ENCODE measurements at regions of chr18 and their contacts with region 1.

Region 1: GRCh38 chr18:12038639-12039417 is 54.8 kb upstream of the ANKRD62 start:
- DNase-seq: peak; percentile 64 to 84
- ATAC-seq: peak; percentile 87 to 95
- H3K4me3 ChIP-seq: peak overlapping the region; percentile 52
- H3K27ac ChIP-seq: peak overlapping the region; percentile 78 to 93
- H3K4me1 ChIP-seq: peaks cover 23% of the 10 kb centered on the region
- CTCF ChIP-seq: peak; percentile 84
- EP300 ChIP-seq: no peak
- POLR2A ChIP-seq: no peak
- RAD21 ChIP-seq: peak; percentile 84 to 93

Region 2: DNA sequence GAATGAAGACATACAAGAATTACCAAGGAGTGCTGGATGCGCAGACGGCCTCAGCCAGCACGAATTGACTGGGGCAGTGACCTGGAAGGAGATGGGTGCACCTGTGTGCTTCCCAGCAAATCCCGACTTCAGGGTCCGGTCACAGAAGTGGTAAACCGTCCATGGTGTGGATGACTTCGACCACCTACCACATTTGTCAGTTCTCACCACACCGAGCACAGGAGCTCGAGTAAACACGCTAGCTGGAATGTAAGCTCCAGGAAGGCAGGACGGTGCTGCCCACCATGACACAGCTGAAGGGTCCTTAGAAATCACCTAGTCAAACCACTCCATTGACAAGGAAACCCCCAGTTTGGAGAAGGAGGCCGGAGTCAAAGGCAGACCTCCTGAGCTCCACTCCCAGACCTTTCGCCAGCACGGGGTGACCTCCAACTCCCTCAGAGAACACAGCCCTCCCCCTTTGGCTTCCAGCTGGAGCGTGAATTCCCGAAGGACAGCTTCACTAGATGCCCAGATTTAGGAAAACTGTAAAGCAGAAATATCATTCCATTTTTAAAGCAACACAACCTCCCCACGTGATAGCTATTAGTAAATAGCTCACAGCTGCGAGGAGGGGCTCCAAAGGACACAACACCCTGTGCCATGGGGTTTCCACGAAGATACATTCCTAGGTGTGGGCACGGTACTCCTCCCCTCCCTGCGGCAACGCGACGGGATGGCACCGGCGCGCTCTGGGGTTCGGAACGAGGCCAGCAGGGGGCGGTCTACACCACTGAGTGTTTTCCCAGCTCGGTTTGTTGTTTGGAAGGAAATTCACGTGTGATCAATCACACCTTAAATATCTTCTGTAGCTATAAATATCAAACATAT is 383.9 kb before region 1 on chr18:
- CTCF ChIA-PET with region 1: interaction called, 29 read pairs
- POLR2A ChIA-PET with region 1: no interaction called
- DNase-seq: peak; percentile 37 to 65
- ATAC-seq: peak; percentile 88 to 93
- H3K4me3 ChIP-seq: 0 out of 3 replicates have a peak overlapping the region, but pooled peaks have one; percentile 29
- H3K27ac ChIP-seq: 0 out of 6 replicates have a peak overlapping the region, but pooled peaks of 1 of the 2 experiments have one; percentile 18
- H3K4me1 ChIP-seq: no peaks in the 10 kb centered on the region
- CTCF ChIP-seq: peak; percentile 78
- EP300 ChIP-seq: no peak
- POLR2A ChIP-seq: no peak
- RAD21 ChIP-seq: peak; percentile 76 to 84

Region 3: DNA sequence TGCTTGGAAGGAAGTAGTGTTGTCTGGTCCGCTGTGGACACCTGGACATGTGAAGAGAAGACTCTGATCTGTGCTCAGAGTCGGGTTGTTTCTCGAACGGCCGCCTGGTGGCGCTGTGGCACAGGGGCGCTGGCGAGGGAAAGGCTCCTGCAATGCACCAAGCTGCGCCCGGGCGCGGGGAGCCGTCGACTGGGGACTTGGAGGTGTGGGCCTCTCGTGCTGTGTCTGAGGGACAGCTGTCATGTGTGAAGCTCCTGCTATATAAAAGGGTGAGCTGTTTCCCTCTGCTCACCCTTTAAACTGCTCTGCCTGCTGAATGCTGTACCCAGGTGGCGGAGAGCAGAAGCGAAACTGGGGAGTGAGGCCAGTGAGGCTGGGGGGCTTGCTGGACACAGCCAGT is 305.8 kb before region 1 on chr18:
- CTCF ChIA-PET with region 1: interaction called, 13 read pairs
- POLR2A ChIA-PET with region 1: no interaction called
- DNase-seq: peak; percentile 52 to 74
- ATAC-seq: peak; percentile 96 to 98
- H3K4me3 ChIP-seq: no peak overlapping the region
- H3K27ac ChIP-seq: peak overlapping the region; percentile 60 to 70; a peak in 4 of 6 replicates
- H3K4me1 ChIP-seq: 0 out of 3 replicates have a peak, but pooled peaks cover 3% of the 10 kb centered on the region
- CTCF ChIP-seq: peak; percentile 79
- EP300 ChIP-seq: no peak
- POLR2A ChIP-seq: no peak
- RAD21 ChIP-seq: peak; percentile 79 to 84

Region 4: DNA sequence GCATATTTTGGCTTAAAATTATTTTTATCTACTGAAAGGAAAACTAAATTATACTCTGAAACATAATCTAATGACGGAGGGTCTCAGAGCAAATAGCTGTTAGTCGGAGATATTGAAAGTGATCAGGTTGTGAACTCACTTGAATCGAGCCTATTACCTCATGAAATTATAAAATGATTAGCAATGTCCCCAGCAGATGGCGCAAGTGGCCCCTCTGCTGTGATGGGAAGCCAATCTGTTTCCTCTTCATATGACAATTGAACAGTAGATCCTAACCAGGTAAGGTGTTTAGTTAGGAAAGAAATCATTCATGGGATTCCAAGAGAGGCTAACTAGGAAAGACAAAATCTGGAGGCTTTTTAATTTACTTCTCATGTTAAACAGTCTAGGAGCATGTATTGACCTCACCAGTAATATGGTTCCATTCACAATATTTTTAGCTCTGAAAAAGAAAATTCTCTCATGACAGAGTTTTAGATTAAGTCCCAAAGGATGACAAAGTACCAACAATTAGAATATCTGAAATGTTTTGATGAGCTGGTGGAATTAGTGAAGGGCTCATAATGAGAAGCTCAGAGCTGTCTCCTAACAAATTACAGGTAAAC is 100.9 kb before region 1 on chr18:
- CTCF ChIA-PET with region 1: interaction called, 39 read pairs
- POLR2A ChIA-PET with region 1: interaction called, 4 read pairs
- DNase-seq: peak; percentile 58 to 69
- ATAC-seq: peak; percentile 54 to 81; a peak in 4 of 6 replicates
- H3K4me3 ChIP-seq: no peak overlapping the region
- H3K27ac ChIP-seq: peak overlapping the region in 1 of 2 experiments; percentile 55; a peak in 2 of 6 replicates
- H3K4me1 ChIP-seq: peaks cover 6% of the 10 kb centered on the region; the same call in 1 of the 3 replicates
- CTCF ChIP-seq: peak; percentile 74
- EP300 ChIP-seq: no peak
- POLR2A ChIP-seq: no peak
- RAD21 ChIP-seq: peak; percentile 85 to 86

Region 5: DNA sequence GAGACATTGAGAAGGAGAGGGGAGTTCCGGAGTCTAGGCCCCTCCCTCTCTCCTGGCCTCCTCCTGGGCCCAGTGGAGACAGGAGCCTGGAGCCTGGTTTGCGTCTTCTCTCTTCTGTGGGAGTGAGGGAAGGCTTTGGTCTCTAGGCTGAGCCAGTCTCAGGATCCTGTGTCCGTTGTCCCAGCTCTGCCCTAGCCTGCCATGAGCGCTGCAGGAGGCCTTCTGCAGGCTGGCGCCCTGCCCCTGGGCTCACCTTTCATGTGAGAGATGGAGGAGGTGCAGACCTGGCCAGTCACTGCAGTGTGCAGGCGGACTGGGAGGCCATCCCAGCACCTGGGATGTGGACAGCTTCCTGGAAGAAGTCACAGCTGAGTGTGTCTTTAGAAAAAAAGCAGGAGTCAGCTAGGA is 48.9 kb before region 1 on chr18:
- CTCF ChIA-PET with region 1: interaction called, 39 read pairs
- POLR2A ChIA-PET with region 1: no interaction called
- DNase-seq: no peak
- ATAC-seq: no peak
- H3K4me3 ChIP-seq: no peak overlapping the region
- H3K27ac ChIP-seq: peak overlapping the region in 1 of 2 experiments; percentile 66; a peak in 3 of 6 replicates
- H3K4me1 ChIP-seq: peaks cover 68% of the 10 kb centered on the region
- CTCF ChIP-seq: no peak
- EP300 ChIP-seq: no peak
- POLR2A ChIP-seq: no peak
- RAD21 ChIP-seq: no peak

Region 6: DNA sequence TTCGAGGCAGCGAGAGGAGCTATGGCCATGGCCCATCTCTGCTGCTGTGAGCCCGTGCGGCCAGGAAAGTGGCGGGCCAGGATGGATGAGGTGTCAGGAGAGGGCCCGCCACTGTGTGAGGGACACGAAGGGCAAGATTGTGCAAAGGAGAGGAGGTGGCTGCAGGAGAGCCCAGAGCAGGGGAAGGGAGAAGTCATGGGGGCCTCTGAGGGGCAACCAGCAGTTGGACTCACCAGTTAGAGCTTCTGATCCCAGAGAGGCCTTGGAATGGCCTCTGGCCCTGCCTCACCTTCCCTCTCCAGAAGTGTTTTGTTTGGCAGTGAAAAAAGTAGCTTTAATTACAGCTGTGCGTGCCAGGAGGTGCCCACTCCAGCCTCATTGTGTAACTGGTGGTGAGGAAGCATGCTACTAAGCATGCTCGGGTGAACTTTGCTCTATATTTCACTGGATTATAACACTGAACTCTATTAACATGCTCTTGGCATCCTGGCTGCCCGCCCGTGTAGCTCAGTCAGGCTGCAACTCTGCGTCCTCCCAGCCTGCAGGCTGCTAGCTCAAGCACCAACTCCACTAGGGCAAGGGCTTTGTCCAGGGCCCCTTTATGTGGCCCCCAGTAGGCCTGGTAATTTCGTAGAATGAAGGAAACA is 23.3 kb before region 1 on chr18:
- CTCF ChIA-PET with region 1: interaction called, 11 read pairs
- POLR2A ChIA-PET with region 1: no interaction called
- DNase-seq: no peak
- ATAC-seq: no peak
- H3K4me3 ChIP-seq: no peak overlapping the region
- H3K27ac ChIP-seq: no peak overlapping the region
- H3K4me1 ChIP-seq: no peaks in the 10 kb centered on the region
- CTCF ChIP-seq: no peak
- EP300 ChIP-seq: no peak
- POLR2A ChIP-seq: no peak
- RAD21 ChIP-seq: no peak

Region 7: GRCh38 chr18:12246849-12247808 is 208.3 kb after region 1 on chr18:
- CTCF ChIA-PET with region 1: no interaction called
- POLR2A ChIA-PET with region 1: no interaction called
- DNase-seq: peak; percentile 21 to 50
- ATAC-seq: peak; percentile 39 to 85; a peak in 4 of 6 replicates
- H3K4me3 ChIP-seq: no peak overlapping the region
- H3K27ac ChIP-seq: no peak overlapping the region
- H3K4me1 ChIP-seq: no peaks in the 10 kb centered on the region
- CTCF ChIP-seq: peak; percentile 32
- EP300 ChIP-seq: no peak
- POLR2A ChIP-seq: no peak
- RAD21 ChIP-seq: peak in 1 of 2 experiments; percentile 48; a peak in 2 of 5 replicates